Astrocyte of the cerebellum (primary cell): ENCODE measurements at regions of chr1 and their contacts with region 1.

Region 1: DNA sequence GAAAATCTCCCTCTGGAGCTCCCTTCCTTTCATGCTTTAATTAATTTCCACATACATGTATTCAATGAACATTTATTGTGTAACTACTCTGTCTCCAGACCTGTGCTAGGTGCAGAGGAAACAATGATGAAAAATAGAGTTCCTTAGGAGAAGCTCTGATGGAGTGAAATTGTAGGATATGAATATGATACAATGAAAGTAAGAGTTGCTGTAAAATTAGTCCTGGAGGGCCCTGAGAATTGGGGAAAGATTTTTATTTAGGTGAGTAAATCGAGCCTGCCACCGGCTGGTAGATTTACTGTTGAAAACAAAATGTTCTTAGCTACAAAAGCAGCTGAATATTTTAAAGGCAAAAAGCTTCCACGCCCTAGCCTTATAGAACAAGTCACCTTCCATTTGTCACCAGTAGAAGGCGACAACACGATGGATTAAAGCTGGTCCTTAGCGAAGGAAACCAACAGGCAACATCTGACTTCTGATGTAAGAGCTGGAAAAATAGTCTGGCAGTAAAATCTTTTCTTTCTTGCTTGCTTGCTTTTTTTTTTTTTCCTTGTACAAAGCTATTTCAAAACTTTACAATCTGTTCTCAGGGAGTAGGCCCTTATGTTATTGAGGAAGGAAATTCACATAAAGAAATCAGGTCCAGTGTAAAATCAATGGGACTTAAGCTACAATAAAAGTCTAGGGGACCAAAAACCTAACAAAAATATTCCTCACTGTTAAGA is 82.0 kb upstream of the ROR1 start:
- DNase-seq: peak; percentile 88
- H3K4me3 ChIP-seq: no peak overlapping the region
- CTCF ChIP-seq: peak; percentile 79

Region 2: GRCh38 chr1:63537940-63538339 is 153.9 kb before region 1 on chr1:
- in situ Hi-C with region 1: no loop called
- DNase-seq: peak; percentile 4
- H3K4me3 ChIP-seq: no peak overlapping the region
- CTCF ChIP-seq: no peak

Region 3: DNA sequence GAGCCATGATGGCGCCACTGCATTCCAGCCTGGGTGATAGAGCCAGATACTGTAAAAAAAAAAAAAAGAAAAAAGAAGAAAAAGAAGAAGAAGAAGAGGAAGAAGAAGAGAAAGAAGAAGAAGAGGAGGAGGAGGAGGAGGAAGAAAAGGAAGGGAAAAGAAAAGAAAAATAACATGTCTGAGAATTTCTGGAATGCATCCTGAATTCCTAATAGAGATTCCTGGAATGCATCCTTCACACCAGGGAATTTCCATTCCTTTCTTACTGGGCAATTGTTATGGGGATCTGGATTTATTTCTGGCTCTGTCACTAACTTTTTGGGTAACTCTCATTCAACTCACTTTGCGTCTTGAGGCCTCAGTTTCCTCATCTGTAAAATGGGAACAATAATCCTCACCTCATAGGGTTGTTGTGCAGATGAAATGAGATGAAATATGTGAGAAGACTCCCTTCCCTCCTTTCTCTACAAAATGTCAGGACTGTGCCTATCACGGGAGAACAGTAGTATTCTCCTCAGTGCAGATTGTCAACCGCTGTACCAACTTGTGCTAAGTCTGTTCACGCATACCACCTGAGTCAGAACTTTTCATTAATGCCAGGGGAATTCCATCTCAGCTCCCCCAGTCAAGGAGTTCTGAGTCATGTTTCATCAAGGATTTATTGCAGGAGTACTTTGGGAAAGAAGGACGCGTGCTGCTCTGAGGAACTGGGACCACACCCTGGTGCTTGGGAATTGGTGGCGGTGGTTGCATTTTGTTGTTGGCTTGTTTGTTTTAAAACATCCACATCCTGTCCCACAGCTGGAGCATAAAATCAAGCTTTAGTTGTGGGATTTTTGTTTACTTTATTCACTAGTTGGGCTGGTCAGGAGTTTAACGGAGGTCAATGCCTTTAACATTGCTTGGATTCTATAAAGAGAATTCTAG is 39.5 kb after region 1 on chr1:
- in situ Hi-C with region 1: loop called (anchors 5 kb)
- DNase-seq: peak; percentile 73
- H3K4me3 ChIP-seq: no peak overlapping the region
- CTCF ChIP-seq: no peak

Region 4: DNA sequence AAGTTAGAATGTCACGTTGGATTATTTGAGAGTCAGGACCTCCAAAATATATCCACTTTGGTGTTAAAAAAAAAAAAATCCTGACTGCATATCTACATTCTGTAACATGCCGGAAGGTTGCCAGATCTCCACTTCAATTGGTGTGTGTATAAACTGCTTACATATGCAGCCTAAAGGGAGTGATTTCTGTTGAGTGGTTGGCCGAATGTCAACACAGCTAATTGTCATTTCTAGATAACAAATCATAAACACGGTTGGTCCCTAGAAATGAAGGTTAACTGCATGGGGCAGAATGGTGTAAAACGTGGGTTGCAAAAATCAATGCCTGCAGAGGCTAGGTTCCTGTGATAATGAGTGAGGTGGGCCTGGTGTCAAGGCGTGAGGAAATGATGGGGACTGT is 66.9 kb after region 1 on chr1:
- in situ Hi-C with region 1: no loop called
- DNase-seq: no peak
- H3K4me3 ChIP-seq: no peak overlapping the region
- CTCF ChIP-seq: no peak